ENCODE measurements at regions of chr10 and their contacts with region 1.

Region 1: DNA sequence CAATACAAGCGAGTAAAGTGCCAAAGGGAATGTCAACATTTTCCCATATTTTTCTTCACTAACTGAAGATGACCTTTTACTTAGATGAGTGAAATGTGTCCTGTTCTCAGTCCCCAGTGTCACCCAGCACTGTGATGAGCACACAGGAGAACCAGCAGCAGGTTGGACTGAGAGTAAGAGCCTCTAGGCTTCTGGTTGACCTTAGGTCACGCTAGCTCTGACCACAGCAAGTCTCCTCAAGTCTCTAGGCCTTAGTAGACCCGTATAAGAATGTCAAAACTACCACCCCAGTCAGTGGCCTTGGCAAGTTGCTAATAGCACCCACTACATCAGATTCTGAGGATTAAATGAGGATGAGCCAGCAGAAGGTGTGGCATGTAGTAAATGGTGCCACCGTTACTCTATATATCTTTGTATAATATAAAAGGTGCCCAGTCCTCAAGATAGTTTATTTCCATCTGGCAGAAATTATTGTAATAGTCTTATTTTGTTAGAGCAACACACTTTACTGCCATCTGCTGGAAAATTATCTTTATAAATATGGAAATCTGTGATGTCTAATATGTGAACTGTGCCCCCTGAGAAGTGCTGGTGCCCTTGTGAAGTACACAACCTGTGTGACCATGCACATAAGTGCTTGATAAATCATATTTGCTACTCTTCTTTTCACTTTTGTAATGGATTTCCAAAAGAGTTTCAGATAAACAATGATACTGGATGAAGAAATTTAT is 75.7 kb downstream of the SPAG6 start:
- DNase-seq: no peak
- H3K4me3 Mint-ChIP-seq: no peak overlapping the region
- H3K27ac Mint-ChIP-seq: no peak overlapping the region
- H3K4me1 Mint-ChIP-seq: no peaks in the 10 kb centered on the region
- H3K27me3 Mint-ChIP-seq: no peaks in the 10 kb centered on the region

Region 2: GRCh38 chr10:21989453-21990154 is 431.3 kb before region 1 on chr10:
- CTCF ChIA-PET with region 1: interaction called, 3 read pairs
- intact Hi-C with region 1: loop called (anchors 1 kb)
- DNase-seq: peak; percentile 54
- H3K4me3 Mint-ChIP-seq: no peak overlapping the region
- H3K27ac Mint-ChIP-seq: no peak overlapping the region
- H3K4me1 Mint-ChIP-seq: no peaks in the 10 kb centered on the region
- H3K27me3 Mint-ChIP-seq: no peaks in the 10 kb centered on the region

Region 3: DNA sequence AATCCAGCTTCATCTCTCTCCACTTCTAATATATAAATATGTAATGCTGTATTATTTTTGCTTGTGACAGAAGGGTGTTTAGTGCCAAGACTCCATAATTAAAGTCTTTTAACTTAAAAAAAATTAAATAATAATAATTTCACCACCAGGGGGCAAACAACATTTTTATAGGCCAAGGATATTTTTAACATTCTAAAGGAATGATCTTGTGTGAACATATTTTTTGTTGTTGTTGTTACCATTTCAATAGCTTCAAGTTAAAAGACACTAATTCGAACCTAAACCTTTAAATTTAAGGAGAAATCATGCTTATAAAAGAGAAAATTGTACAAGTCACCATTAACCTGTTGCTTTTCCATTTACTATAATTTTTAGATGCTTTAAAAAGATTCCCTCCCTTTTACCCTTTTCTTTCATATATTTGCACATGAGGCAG is 410.0 kb before region 1 on chr10:
- CTCF ChIA-PET with region 1: no interaction called
- intact Hi-C with region 1: loop called (anchors 1 kb)
- DNase-seq: no peak
- H3K4me3 Mint-ChIP-seq: no peak overlapping the region
- H3K27ac Mint-ChIP-seq: no peak overlapping the region
- H3K4me1 Mint-ChIP-seq: no peaks in the 10 kb centered on the region
- H3K27me3 Mint-ChIP-seq: peaks cover 5% of the 10 kb centered on the region

Region 4: GRCh38 chr10:22259280-22259679 is 161.7 kb before region 1 on chr10:
- CTCF ChIA-PET with region 1: no interaction called
- intact Hi-C with region 1: loop called (anchors 1 kb)
- DNase-seq: peak; percentile 40
- H3K4me3 Mint-ChIP-seq: no peak overlapping the region
- H3K27ac Mint-ChIP-seq: no peak overlapping the region
- H3K4me1 Mint-ChIP-seq: peaks cover 25% of the 10 kb centered on the region
- H3K27me3 Mint-ChIP-seq: peaks cover 4% of the 10 kb centered on the region

Region 5: DNA sequence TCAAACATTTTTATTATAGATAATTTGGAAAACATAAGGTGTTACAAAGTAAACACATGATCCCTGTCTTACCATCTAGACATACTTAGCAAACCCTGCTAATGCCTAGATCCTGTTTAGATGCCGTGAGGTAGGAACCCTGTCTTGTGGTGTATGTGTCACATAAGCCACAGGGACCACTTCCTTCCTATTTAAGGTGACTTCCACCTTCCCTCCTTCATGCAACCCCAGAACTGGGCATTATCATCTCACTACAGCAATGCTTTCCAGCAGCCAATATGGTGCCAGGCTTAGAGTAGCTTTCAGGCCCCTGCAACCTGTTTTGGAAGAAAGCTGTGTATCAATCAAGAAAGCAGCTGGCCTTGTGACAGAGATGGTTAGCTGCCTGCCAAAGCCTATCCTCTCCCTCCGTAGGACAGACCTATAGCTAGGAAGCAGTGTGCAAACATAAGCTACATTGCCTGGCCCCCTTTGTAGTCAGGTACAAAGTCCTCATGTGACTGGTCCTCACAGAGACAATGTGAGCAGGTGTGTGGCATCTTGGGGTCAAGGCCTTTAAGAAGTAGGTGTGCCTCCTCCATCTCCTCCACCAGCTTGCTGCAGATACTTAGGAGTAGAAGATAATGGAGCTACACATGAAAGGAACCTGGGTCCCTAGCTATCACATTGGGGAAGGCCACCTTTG is 71.1 kb after region 1 on chr10:
- CTCF ChIA-PET with region 1: no interaction called
- intact Hi-C with region 1: no loop called
- DNase-seq: peak; percentile 41
- H3K4me3 Mint-ChIP-seq: no peak overlapping the region
- H3K27ac Mint-ChIP-seq: no peak overlapping the region
- H3K4me1 Mint-ChIP-seq: peaks cover 10% of the 10 kb centered on the region
- H3K27me3 Mint-ChIP-seq: peaks cover 3% of the 10 kb centered on the region

Measured in activated naive CD4-positive, alpha-beta T cell treated with anti-CD3 and anti-CD28 coated beads for 36 hours (primary cell).